Posterior vena cava (tissue), 2 donors: ENCODE measurements at regions of chr11 and their contacts with region 1.

Region 1: GRCh38 chr11:59802639-59803176 is 7.9 kb downstream of the MRPL16 start:
- DNase-seq: no peak

Region 2: GRCh38 chr11:59753650-59754493 is 48.8 kb before region 1 on chr11:
- intact Hi-C with region 1: loop called (anchors 2 to 5 kb)
- DNase-seq: peak; percentile 96

Region 3: GRCh38 chr11:59841514-59841913 is 38.8 kb after region 1 on chr11:
- intact Hi-C with region 1: no loop called
- DNase-seq: no peak